ENCODE measurements at regions of chr6 and their contacts with region 1.

Region 1: DNA sequence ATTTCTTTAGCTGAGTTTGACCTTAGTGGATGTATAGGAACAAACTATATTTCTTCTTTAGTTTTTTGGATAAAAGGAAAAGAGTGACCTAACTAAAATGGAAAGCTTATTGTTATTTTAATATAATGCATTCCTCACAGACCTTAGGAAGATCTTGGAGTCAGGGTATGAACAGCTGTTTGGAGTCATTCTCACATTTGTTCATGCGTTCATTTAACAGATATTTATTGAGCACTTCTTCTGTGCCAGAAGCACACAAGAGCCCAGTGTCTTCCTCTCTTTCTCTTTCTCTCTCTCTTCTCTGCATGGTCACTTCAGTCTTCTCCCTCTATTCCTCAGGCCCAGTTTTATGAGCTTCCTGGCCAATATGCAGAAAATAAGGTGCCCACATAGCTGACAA is 744.0 kb upstream of the MAP3K7 start:
- DNase-seq: no peak
- CTCF ChIP-seq: no peak

Region 2: DNA sequence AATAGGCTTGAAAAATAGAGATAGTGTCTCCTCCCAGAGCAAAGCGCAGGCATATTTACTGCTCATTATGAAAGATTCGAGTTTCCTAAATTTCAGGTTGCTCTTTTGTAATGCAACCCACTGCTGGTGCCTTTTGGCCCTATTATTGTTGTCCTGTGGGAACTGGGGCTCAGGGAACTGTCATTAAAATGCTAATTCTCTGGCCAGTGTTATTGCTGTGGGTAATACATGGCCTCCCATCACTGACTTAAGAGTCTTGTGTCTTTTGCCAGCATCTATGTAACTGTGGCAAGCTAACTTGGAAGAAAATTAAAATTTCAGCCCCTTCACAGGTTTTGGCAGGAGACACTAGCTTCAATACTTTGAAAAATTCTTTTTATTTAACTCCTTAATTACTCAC is 10.1 kb after region 1 on chr6:
- CTCF ChIA-PET with region 1: interaction called, 22 read pairs
- POLR2A ChIA-PET with region 1: no interaction called
- DNase-seq: no peak
- CTCF ChIP-seq: no peak

Region 3: DNA sequence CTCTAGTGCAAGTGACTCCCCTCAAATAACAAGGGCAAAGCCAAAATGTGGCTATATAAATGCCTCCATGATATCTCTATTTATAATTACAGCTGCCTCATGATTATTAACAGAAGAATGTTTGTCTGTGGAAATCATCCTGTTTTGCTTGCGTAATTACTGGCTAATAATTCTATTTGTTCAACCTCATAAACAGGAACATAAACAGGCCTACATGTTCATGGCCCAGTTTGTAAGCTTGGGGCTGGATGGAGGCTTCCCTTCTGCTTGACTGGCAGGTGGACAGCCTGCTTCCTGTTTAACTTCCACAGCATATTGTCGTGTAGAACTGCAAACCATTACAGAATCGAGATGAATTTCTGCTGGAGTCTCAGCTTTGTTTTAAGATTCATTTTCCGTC is 22.0 kb after region 1 on chr6:
- CTCF ChIA-PET with region 1: interaction called, 11 read pairs
- POLR2A ChIA-PET with region 1: no interaction called
- DNase-seq: no peak
- CTCF ChIP-seq: no peak

Region 4: GRCh38 chr6:91387290-91388062 is 56.6 kb after region 1 on chr6:
- CTCF ChIA-PET with region 1: no interaction called
- POLR2A ChIA-PET with region 1: no interaction called
- DNase-seq: no peak
- CTCF ChIP-seq: no peak